Cardiac septum (tissue), 1 donor: ENCODE measurements at regions of chr4 and their contacts with region 1.

Region 1: DNA sequence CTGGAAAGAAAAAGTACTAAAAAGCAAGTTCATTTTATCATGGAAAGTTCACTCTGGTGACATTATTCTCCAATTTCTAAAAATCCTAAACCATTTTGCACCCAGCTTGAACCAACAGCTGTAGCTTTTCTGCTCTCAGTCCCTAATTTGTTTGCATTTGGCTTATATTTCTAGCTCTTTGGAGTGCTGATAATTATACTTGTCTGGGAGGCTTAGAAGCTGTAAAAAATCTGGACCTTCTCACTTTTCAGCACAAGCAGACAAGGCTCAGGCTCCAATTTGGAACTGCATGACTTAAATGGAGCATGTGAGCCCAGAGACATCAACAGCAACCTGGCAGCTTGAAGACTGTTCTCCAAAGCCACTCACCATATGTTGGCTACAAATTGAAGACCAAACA is 170.9 kb upstream of the PCDH18 start:
- DNase-seq: no peak

Region 2: GRCh38 chr4:137393044-137393443 is 310.2 kb before region 1 on chr4:
- intact Hi-C with region 1: loop called (anchors 5 kb)
- DNase-seq: no peak

Region 3: GRCh38 chr4:137651128-137651527 is 52.1 kb before region 1 on chr4:
- intact Hi-C with region 1: no loop called
- DNase-seq: no peak

Region 4: GRCh38 chr4:137961051-137961438 is 257.9 kb after region 1 on chr4:
- intact Hi-C with region 1: no loop called
- DNase-seq: no peak